Pancreas (tissue), 10 donors: ENCODE measurements at regions of chr16 and their contacts with region 1.

Region 1: DNA sequence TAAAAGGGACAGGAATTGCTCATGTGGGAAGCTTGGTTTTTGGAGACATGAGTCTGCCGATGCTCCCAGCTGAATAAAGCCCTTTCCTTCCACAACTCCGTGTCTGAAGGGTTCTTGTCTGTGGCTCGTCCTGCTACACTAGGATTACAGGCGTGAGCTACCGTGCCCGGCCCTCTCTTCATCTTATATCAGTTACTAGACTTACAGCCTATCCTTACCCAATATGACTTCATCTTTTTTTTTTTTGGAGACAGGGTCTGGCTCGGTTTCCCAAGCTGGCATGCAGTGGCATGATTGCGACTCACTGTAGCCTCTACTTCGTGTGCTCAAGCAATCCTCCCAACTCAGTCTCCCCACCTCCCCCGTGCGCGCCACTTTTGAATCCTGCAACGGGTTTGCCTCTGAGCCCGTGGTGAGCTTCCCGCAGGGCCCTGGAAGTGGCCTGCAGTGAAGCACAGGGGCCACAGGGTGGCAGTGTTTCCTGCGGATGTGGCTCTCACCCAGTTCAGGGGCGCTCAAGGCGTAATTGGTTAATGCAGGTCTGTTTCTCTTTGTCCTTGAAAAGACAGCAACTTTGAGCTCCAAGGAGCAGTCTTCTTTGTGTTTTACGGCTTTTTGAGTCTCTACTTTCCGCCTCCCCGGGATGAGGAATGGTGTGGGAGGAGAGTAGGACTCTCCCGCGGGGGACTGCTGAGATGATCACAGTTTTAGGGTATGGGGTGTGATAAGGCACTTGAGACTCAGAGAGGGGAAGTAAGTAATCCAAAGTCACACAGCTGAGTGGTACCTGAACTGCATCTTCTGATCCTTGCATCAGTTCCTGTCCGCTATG is 22.7 kb upstream of the GPRC5B start:
- DNase-seq: peak; percentile 38 to 87 (median 76)
- ATAC-seq: peak; percentile 94 to 100 (median 99)
- H3K4me3 ChIP-seq: peak overlapping the region in 1 of 4 donors; percentile 17
- H3K27ac ChIP-seq: no peak overlapping the region
- H3K4me1 ChIP-seq: no peaks in the 10 kb centered on the region
- H3K27me3 ChIP-seq: no peaks in the 10 kb centered on the region
- CTCF ChIP-seq: peak; percentile 93 to 98 (median 96)

Region 2: DNA sequence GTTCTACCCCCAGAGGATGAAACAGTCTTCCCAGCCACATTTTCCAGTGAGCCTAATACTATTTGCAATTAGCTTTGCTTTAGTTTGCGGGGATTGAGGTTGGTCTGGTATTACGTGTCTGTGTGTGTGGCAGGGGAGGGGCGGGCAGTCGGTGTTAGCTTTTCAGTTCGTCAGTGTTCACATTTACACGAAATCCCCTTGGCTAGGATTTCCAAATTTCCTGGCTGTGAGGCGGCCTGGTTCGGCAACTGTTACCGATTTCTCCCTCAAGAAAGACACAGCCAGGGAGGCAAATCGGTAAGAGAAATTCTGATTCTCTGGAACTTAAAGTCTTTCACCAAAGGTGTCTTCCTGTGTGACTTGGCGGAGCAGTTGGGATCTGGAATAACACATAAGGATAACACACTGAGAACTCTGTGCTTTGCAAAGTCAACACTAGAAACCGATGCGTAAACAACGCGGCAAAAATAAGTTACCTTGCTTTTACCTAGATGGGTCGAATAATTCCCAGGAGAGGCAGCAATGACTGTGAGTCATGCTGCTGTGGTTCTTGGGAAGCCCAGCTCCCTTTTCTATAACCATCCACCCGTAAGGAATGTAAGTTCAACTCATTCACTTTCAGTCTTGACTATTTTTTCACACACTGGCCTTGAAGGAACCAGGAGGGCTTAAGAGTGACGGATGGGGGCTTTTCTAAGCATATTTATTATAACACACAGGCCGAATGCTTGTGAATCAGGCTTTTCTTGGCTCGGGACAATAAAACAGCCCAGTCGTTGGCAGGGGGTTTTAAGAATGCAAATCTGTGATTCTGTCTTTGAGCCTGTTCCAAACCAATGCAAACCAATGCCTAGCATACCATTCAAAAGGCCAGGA is 47.0 kb before region 1 on chr16:
- intact Hi-C with region 1: no loop called
- DNase-seq: peak in 1 of 6 donors; percentile 13
- ATAC-seq: no peak
- H3K4me3 ChIP-seq: no peak overlapping the region
- H3K27ac ChIP-seq: no peak overlapping the region
- H3K4me1 ChIP-seq: no peaks in the 10 kb centered on the region
- H3K27me3 ChIP-seq: no peaks in the 10 kb centered on the region
- CTCF ChIP-seq: no peak

Region 3: DNA sequence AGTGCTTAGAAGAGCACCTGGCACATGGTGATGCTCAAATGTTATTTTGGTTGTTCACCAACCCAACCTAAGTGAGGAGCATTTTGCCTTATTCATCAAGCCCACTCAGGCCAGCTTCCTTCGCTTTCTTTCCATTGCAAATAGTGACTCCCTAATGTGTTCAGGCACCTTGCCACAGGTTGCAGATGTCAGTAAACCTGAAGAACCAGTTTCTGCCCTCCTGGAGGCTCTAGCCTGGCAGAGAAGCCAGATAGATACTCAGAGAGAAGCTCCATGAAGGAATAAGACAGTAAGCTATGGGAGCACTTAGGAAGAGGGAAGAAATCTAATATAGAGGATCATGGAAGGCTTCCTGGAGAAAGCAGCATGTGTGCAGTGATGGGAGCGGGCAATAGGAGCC is 142.5 kb after region 1 on chr16:
- intact Hi-C with region 1: no loop called
- DNase-seq: peak in 1 of 6 donors; percentile 14
- ATAC-seq: no peak
- H3K4me3 ChIP-seq: no peak overlapping the region
- H3K27ac ChIP-seq: no peak overlapping the region
- H3K4me1 ChIP-seq: no peaks in the 10 kb centered on the region
- H3K27me3 ChIP-seq: no peaks in the 10 kb centered on the region
- CTCF ChIP-seq: no peak

Region 4: GRCh38 chr16:20084624-20085211 is 177.3 kb after region 1 on chr16:
- intact Hi-C with region 1: no loop called
- DNase-seq: no peak
- ATAC-seq: no peak
- H3K4me3 ChIP-seq: no peak overlapping the region
- H3K27ac ChIP-seq: no peak overlapping the region
- H3K4me1 ChIP-seq: no peaks in the 10 kb centered on the region
- H3K27me3 ChIP-seq: no peaks in the 10 kb centered on the region
- CTCF ChIP-seq: no peak

Region 5: GRCh38 chr16:20241321-20241720 is 333.9 kb after region 1 on chr16:
- intact Hi-C with region 1: no loop called
- DNase-seq: no peak
- ATAC-seq: no peak
- H3K4me3 ChIP-seq: no peak overlapping the region
- H3K27ac ChIP-seq: no peak overlapping the region
- H3K4me1 ChIP-seq: no peaks in the 10 kb centered on the region
- H3K27me3 ChIP-seq: peaks cover 0 to 7% (median 0%) of the 10 kb centered on the region in 4 donors
- CTCF ChIP-seq: no peak

Region 6: DNA sequence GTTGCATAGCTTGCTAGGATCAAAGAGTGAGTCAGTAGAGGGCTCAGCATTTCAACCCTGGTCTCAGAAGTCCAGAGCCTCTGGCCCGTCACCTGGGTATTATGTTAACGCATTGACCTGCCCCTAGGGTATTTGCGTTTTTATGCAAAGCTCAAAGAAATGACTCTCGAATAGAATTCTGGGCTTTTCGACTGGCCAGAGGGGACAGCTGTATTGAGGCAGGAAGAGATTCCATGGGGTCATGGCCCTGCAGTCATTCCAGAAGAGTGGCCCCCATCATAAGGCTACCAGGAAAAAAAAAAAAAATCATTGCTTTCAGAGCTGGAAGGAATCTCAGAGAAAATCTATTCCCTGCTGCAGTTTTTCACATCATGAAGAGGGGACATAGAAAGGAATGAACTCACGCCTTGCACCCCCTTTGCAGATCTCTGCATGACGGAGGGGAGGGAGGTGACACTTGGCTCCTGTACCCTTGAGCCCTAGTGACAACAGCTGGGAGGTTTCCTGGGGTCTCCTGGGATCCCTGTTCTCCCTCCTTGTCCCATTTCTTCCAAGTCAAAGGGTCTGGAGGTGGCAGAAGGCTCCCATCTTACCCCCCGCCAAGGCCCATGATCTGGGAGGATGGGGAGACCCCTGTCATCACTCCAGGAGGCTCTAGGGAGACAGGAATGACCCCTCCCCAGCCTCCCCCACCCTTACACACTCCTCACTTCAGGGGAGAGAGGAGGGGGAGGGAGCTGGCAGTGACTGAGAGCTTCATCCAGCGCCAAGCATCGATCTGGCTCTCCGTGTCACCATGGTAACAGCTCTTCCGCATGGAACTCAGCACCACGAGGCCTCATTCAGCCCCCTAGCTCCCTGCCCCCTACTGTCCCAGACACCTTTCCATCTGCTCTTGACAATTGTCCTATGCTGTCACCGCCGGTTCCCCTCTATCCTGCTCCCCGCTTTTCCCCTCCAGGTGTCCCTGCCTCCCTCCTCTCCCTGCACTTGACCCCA is 384.1 kb after region 1 on chr16:
- intact Hi-C with region 1: loop called in 2 of 3 experiments (anchors 5 to 10 kb)
- DNase-seq: no peak
- ATAC-seq: peak in 1 of 4 donors; percentile 17
- H3K4me3 ChIP-seq: no peak overlapping the region
- H3K27ac ChIP-seq: no peak overlapping the region
- H3K4me1 ChIP-seq: no peaks in the 10 kb centered on the region
- H3K27me3 ChIP-seq: no peaks in the 10 kb centered on the region
- CTCF ChIP-seq: no peak

Region 7: DNA sequence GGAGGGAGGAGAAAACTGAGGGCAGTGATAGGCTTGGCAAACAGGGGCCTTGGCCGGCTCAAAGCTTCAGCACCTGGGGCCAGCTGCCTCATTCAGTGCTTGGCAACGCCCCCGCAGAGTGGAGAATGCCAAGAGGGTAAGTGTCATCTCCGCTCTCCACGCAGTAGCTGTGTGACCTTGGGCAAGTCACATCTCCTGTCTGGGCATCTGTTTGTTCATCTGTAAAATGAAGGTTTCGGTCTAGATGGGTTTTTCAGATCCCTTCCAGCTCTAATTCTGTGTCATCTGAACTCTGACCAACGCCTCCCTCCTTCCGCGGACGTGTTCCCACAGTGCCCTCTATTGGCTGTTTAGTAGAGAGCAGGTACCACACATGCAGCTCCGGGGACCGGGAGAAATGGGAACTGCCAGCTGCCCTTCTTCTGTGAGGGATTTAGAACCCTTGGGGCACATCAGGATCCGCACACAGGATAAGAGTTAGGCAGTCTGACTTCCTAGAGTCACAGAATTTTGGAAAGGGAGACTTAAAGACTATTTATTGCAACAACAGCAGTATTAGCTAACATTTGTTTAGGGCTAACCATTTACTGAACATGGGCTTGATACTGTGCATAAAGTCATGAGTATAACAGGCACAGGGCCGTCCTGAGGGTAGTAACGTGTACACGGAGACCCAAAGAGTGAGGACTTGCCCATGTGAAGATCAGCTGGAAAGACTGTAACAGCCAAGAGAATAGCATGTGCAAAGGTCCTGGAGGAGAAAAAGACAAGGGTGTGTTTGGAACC is 393.1 kb after region 1 on chr16:
- intact Hi-C with region 1: loop called (anchors 5 to 10 kb)
- DNase-seq: peak; percentile 42 to 88 (median 73)
- ATAC-seq: peak; percentile 29 to 93 (median 67)
- H3K4me3 ChIP-seq: no peak overlapping the region
- H3K27ac ChIP-seq: no peak overlapping the region
- H3K4me1 ChIP-seq: no peaks in the 10 kb centered on the region
- H3K27me3 ChIP-seq: no peaks in the 10 kb centered on the region
- CTCF ChIP-seq: peak; percentile 30 to 68 (median 58)

Region 8: GRCh38 chr16:20383106-20384029 is 476.0 kb after region 1 on chr16:
- intact Hi-C with region 1: loop called in 2 of 3 experiments (anchors 5 to 10 kb)
- DNase-seq: peak; percentile 65 to 86 (median 74)
- ATAC-seq: peak; percentile 70 to 89 (median 85)
- H3K4me3 ChIP-seq: no peak overlapping the region
- H3K27ac ChIP-seq: no peak overlapping the region
- H3K4me1 ChIP-seq: peaks cover 0 to 13% (median 0%) of the 10 kb centered on the region in 3 donors
- H3K27me3 ChIP-seq: no peaks in the 10 kb centered on the region
- CTCF ChIP-seq: peak; percentile 75 to 91 (median 86)